ENCODE measurements at regions of chr1 and their contacts with region 1.

Region 1: DNA sequence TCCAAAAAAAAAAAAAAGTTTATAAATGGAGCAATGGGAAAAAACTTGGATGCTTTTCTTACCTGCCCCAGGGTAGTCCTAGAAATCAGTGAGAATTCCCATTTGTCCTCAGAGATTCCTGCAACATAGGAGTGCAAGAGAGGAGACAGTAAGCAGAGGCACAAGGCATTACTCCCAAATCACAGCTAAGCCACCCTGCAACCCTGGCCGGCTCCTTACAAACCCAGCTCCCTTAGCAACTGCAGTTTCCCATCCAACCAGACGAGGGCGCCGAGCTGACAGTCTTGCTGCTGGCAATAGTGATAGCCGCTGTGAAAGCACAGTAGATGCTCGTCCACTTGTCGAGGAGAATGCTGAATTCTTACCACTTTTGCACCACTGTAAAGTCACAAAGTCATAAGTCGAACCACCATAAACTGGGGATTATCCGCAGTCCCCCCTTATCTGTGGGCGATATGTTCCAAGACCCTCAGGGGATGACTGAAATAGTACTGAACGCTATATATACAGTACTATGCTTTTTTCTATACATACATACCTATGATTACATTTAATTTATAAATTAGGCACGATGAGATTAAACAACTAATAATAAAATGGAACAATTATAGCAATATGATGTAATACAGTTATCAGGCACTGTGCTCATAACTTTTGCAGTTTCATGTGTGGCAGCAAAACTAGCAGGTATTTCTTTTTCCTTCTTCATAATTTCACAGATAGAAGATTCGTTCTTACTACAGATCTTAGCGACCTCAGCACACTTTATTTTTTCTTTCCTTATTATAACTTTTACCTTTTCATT is 6.0 kb upstream of the PITHD1 start:
- DNase-seq: peak; percentile 62 to 85 (median 75)
- H3K4me3 ChIP-seq: no peak overlapping the region
- H3K4me3 Mint-ChIP-seq: no peak overlapping the region
- H3K27ac ChIP-seq: no peak overlapping the region
- H3K27ac Mint-ChIP-seq: no peak overlapping the region
- H3K4me1 ChIP-seq: peaks cover under 1 to 5% of the 10 kb centered on the region in 2 donors
- H3K4me1 Mint-ChIP-seq: peaks cover 4% of the 10 kb centered on the region
- H3K27me3 ChIP-seq: no peaks in the 10 kb centered on the region
- H3K27me3 Mint-ChIP-seq: no peaks in the 10 kb centered on the region
- CTCF ChIP-seq: peak; percentile 88

Region 2: GRCh38 chr1:23809751-23810171 is 37.5 kb after region 1 on chr1:
- intact Hi-C with region 1: loop called in 1 of 2 experiments (anchors 5 kb)
- DNase-seq: peak; percentile 86 to 95 (median 91)
- H3K4me3 ChIP-seq: no peak overlapping the region
- H3K4me3 Mint-ChIP-seq: no peak overlapping the region
- H3K27ac ChIP-seq: peak overlapping the region; percentile 53 to 83
- H3K27ac Mint-ChIP-seq: peak overlapping the region; percentile 84 to 96 (median 92)
- H3K4me1 ChIP-seq: peaks cover 53 to 57% of the 10 kb centered on the region in 2 donors
- H3K4me1 Mint-ChIP-seq: peaks cover 57% of the 10 kb centered on the region
- H3K27me3 ChIP-seq: no peaks in the 10 kb centered on the region
- H3K27me3 Mint-ChIP-seq: peaks cover 0 to 3% (median 0%) of the 10 kb centered on the region in 3 donors
- CTCF ChIP-seq: peak; percentile 78

Region 3: GRCh38 chr1:23923592-23924499 is 151.6 kb after region 1 on chr1:
- intact Hi-C with region 1: loop called in 1 of 2 experiments (anchors 5 kb)
- DNase-seq: no peak
- H3K4me3 ChIP-seq: no peak overlapping the region
- H3K4me3 Mint-ChIP-seq: no peak overlapping the region
- H3K27ac ChIP-seq: no peak overlapping the region
- H3K27ac Mint-ChIP-seq: no peak overlapping the region
- H3K4me1 ChIP-seq: peaks cover 8 to 12% of the 10 kb centered on the region in 2 donors
- H3K4me1 Mint-ChIP-seq: peaks cover 12% of the 10 kb centered on the region
- H3K27me3 ChIP-seq: no peaks in the 10 kb centered on the region
- H3K27me3 Mint-ChIP-seq: no peaks in the 10 kb centered on the region
- CTCF ChIP-seq: no peak

Measured in CD14-positive monocyte (primary cell).